IMR-90 (cell line): ENCODE measurements at regions of chr17 and their contacts with region 1.

Region 1: GRCh38 chr17:45410144-45411091 is 22.3 kb downstream of the ARHGAP27 start:
- DNase-seq: no peak
- ATAC-seq: no peak
- H3K4me3 ChIP-seq: no peak overlapping the region
- H3K27ac ChIP-seq: no peak overlapping the region
- H3K4me1 ChIP-seq: peaks cover 6% of the 10 kb centered on the region; the same call in 1 of the 2 replicates
- H3K27me3 ChIP-seq: peaks cover 17% of the 10 kb centered on the region
- CTCF ChIP-seq: no peak
- POLR2A ChIP-seq: no peak
- RAD21 ChIP-seq: no peak

Region 2: GRCh38 chr17:45688353-45688752 is 277.9 kb after region 1 on chr17:
- CTCF ChIA-PET with region 1: no interaction called
- POLR2A ChIA-PET with region 1: interaction called, 19 read pairs
- dilution Hi-C with region 1: no loop called
- in situ Hi-C with region 1: no loop called
- intact Hi-C with region 1: no loop called
- DNase-seq: no peak
- ATAC-seq: no peak
- H3K4me3 ChIP-seq: no peak overlapping the region
- H3K27ac ChIP-seq: no peak overlapping the region
- H3K4me1 ChIP-seq: no peaks in the 10 kb centered on the region
- H3K27me3 ChIP-seq: peaks cover 37% of the 10 kb centered on the region
- CTCF ChIP-seq: no peak
- POLR2A ChIP-seq: no peak
- RAD21 ChIP-seq: no peak

Region 3: GRCh38 chr17:45841883-45842525 is 431.6 kb after region 1 on chr17:
- CTCF ChIA-PET with region 1: no interaction called
- POLR2A ChIA-PET with region 1: no interaction called
- dilution Hi-C with region 1: no loop called
- in situ Hi-C with region 1: loop called (anchors 25 kb)
- intact Hi-C with region 1: no loop called
- DNase-seq: no peak
- ATAC-seq: no peak; the same call in 1 of the 2 replicates
- H3K4me3 ChIP-seq: no peak overlapping the region
- H3K27ac ChIP-seq: no peak overlapping the region
- H3K4me1 ChIP-seq: no peaks in the 10 kb centered on the region
- H3K27me3 ChIP-seq: peaks cover 17% of the 10 kb centered on the region
- CTCF ChIP-seq: no peak
- POLR2A ChIP-seq: no peak
- RAD21 ChIP-seq: no peak